ENCODE measurements at regions of chr1 and their contacts with region 1.

Region 1: DNA sequence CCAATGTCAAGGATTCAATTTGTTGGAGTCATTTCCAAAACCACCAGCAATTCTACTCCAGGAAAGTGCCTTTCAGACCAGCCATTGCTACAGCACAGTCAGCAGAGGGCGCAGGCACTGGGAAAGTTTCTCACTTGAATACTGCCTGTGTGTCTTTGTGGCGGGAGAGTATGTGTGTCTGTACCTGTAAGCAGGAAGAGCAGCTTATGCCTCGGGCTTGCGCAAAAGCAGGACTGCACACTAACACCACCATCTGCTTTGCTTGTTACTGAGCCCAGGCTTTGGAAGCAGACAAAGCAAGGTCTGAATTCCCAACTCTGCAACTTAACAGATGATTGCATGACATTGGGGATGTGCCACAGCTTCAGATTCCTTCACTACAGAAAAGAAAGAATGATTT is 7.0 kb upstream of the CTSE start:
- DNase-seq: peak; percentile 58
- ATAC-seq: peak; percentile 96
- H3K4me3 ChIP-seq: no peak overlapping the region
- H3K27ac ChIP-seq: no peak overlapping the region
- H3K4me1 ChIP-seq: no peaks in the 10 kb centered on the region
- H3K27me3 ChIP-seq: peaks cover 29% of the 10 kb centered on the region
- CTCF ChIP-seq: peak; percentile 91

Region 2: GRCh38 chr1:206047271-206047670 is 16.6 kb after region 1 on chr1:
- CTCF ChIA-PET with region 1: no interaction called
- POLR2A ChIA-PET with region 1: no interaction called
- in situ Hi-C with region 1: no loop called
- intact Hi-C with region 1: loop called (anchors 1 kb)
- DNase-seq: no peak
- ATAC-seq: no peak
- H3K4me3 ChIP-seq: no peak overlapping the region
- H3K27ac ChIP-seq: no peak overlapping the region
- H3K4me1 ChIP-seq: no peaks in the 10 kb centered on the region
- H3K27me3 ChIP-seq: peaks cover 2% of the 10 kb centered on the region; the same call in 1 of the 2 replicates
- CTCF ChIP-seq: no peak

Region 3: GRCh38 chr1:206507284-206508129 is 476.8 kb after region 1 on chr1 and contains the start of gene RASSF5:
- CTCF ChIA-PET with region 1: no interaction called
- POLR2A ChIA-PET with region 1: no interaction called
- in situ Hi-C with region 1: no loop called
- intact Hi-C with region 1: no loop called
- DNase-seq: no peak
- ATAC-seq: peak; percentile 86
- H3K4me3 ChIP-seq: peak within 1 kb of the TSS; percentile 33 to 42
- H3K27ac ChIP-seq: no peak within 1 kb of the TSS
- H3K4me1 ChIP-seq: no peaks in the 10 kb centered on the region
- H3K27me3 ChIP-seq: peaks cover 35% of the 10 kb centered on the region
- CTCF ChIP-seq: no peak
- total RNA-seq, gene RASSF5: 1.6 TPM